ENCODE measurements at regions of chr6 and their contacts with region 1.

Region 1: DNA sequence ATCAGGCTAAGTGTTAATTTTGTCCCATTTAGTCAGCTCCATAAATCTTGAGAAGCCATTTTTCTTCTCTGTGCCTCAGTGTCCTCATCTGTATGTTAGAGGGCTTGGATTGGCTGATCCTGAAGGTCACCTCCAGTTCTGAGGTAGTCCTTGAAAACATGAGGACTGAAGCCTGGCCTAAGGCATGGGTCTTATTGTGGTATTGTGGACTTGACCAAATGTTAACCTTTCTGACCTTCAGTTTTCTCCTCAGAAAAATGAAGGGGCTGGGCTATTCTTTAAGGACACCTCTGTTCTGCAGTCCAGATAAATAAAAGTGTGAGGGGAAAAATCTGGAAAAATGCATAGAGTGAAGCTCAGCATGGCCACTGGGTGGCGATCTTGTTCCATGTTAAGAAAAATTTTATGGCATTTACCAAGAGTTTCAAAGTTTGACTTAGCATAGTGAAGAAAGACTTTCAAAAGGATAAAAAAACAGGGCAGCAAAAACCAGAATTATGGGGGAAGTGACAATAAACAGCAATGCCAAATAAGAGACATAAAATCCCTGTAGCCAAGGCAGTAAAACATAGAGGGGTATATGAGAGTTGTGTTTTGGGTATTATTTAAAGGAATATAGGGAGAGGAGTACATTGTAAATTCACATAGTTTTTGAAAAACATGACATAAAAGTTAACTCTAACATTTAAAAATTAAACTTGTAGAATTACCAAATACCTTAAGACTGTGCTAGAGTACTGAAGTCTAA is 13.2 kb upstream of the TFB1M start:
- DNase-seq: peak; percentile 78
- ATAC-seq: peak; percentile 92
- H3K4me3 ChIP-seq: no peak overlapping the region
- H3K27ac ChIP-seq: peak overlapping the region; percentile 83
- H3K4me1 ChIP-seq: peaks cover 7% of the 10 kb centered on the region; the same call in 1 of the 2 replicates
- H3K27me3 ChIP-seq: no peaks in the 10 kb centered on the region
- CTCF ChIP-seq: peak; percentile 91
- POLR2A ChIP-seq: no peak
- RAD21 ChIP-seq: peak; percentile 89

Region 2: GRCh38 chr6:155765275-155766194 is 438.0 kb after region 1 on chr6:
- CTCF ChIA-PET with region 1: no interaction called
- POLR2A ChIA-PET with region 1: no interaction called
- dilution Hi-C with region 1: no loop called
- in situ Hi-C with region 1: loop called (anchors 25 kb)
- intact Hi-C with region 1: no loop called
- DNase-seq: peak; percentile 90
- ATAC-seq: peak; percentile 85
- H3K4me3 ChIP-seq: no peak overlapping the region
- H3K27ac ChIP-seq: peak overlapping the region; percentile 95
- H3K4me1 ChIP-seq: peaks cover 8% of the 10 kb centered on the region
- H3K27me3 ChIP-seq: no peaks in the 10 kb centered on the region
- CTCF ChIP-seq: no peak
- POLR2A ChIP-seq: no peak
- RAD21 ChIP-seq: no peak

Region 3: DNA sequence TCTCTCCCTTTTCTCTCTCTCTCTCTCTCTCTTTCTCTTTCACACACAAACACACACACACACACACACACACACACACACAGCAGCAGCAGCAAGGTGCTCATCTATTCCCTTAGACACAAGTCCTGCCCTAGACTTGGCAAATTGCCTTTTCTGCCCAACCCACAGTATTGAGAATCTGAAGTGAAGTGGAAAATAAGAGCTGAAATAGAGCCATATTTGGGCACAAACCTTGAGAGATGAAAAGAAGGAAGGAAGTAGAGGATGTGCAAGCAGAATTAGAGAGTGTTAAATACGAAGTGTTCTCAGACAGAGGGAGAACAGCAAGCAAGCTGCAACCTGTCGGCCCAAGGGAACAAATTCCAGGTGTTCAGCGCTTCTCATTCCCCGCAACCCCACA is 685.7 kb after region 1 on chr6:
- CTCF ChIA-PET with region 1: no interaction called
- POLR2A ChIA-PET with region 1: no interaction called
- dilution Hi-C with region 1: no loop called
- in situ Hi-C with region 1: no loop called
- intact Hi-C with region 1: loop called (anchors 10 kb)
- DNase-seq: no peak
- ATAC-seq: no peak
- H3K4me3 ChIP-seq: no peak overlapping the region
- H3K27ac ChIP-seq: no peak overlapping the region
- H3K4me1 ChIP-seq: peaks cover 14% of the 10 kb centered on the region
- H3K27me3 ChIP-seq: no peaks in the 10 kb centered on the region
- CTCF ChIP-seq: no peak
- POLR2A ChIP-seq: no peak
- RAD21 ChIP-seq: no peak

Region 4: GRCh38 chr6:156686995-156687788 is 1359.7 kb after region 1 on chr6:
- CTCF ChIA-PET with region 1: no interaction called
- POLR2A ChIA-PET with region 1: no interaction called
- dilution Hi-C with region 1: no loop called
- in situ Hi-C with region 1: loop called (anchors 25 kb)
- intact Hi-C with region 1: loop called (anchors 2 kb)
- DNase-seq: peak; percentile 87
- ATAC-seq: peak; percentile 94
- H3K4me3 ChIP-seq: peak overlapping the region; percentile 74
- H3K27ac ChIP-seq: peak overlapping the region; percentile 99
- H3K4me1 ChIP-seq: no peaks in the 10 kb centered on the region
- H3K27me3 ChIP-seq: no peaks in the 10 kb centered on the region
- CTCF ChIP-seq: no peak
- POLR2A ChIP-seq: peak; percentile 77
- RAD21 ChIP-seq: no peak

Region 5: DNA sequence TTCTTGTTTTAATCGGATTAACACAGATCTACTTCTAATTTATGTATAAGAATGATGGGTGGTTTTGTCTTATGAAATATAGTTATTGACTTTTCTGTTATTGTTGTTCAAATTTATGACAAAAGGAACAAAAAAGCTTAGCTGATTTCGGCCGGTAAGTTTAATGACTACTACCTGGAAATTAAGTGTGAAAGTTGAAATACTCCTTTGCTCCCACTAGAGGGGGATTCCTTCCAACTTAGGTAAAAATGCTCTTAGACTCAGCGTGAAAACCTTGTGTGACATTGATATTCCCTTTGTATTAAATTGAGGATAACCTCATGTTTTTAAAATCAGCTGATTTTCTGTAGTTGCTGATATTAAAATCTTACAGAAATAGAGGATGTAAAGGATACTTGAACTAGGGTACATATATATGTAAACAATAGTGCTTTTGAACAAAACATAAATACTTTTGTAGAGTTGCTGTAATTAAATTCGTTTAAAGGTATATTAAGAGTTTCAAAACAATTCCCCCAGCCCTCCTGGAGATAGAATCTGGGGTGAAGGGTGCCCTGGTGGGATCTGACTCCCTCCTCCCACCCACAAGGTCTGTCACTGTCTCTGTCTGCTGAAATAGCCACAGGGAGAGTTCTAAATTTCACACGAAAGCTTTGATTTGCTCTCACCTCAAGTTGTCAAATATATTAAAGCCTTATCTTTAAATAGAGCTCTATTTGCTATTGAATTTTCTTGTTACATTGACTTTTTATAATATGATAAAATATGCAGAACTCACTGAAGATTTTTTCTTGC is 1707.1 kb after region 1 on chr6:
- CTCF ChIA-PET with region 1: no interaction called
- POLR2A ChIA-PET with region 1: no interaction called
- dilution Hi-C with region 1: no loop called
- in situ Hi-C with region 1: loop called (anchors 25 kb)
- intact Hi-C with region 1: loop called (anchors 10 kb)
- DNase-seq: peak; percentile 72
- ATAC-seq: peak; percentile 53
- H3K4me3 ChIP-seq: no peak overlapping the region
- H3K27ac ChIP-seq: no peak overlapping the region
- H3K4me1 ChIP-seq: peaks cover 6% of the 10 kb centered on the region
- H3K27me3 ChIP-seq: no peaks in the 10 kb centered on the region
- CTCF ChIP-seq: peak; percentile 75
- POLR2A ChIP-seq: no peak
- RAD21 ChIP-seq: peak; percentile 79

Measured in IMR-90 (cell line).